Left ventricle myocardium superior (tissue), 1 donor: ENCODE measurements at regions of chr7 and their contacts with region 1.

Region 1: GRCh38 chr7:22001345-22002004 is 55.8 kb upstream of the CDCA7L start:
- DNase-seq: no peak
- ATAC-seq: peak; percentile 33

Region 2: DNA sequence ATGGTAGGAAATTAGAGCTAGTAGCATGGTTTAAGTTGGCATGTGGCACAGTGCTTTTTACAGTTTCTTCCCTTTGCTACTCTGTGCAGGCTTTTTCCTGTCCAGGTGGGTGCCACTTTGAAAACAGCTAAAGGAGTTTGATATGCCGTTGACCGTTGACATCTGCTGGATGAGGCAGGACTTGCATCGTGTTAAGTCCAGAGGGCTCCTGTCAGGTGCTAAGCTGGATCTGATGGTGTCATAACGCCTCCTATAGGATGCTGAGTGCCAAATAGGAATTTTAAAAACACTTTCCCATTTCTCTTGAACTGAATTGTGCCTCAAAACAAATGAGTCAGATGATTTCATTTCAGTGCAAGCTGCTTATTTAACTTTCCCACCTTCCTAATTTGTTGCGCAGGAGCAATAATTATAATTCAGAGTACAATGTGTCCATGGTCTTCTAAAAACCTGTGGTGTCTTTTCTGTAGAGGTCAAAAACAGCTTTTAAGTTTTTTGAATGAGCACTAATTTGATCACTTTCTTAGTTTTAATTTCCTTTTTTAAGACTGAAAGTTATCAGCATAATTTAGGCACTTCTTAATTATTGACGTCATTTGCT is 234.1 kb before region 1 on chr7:
- intact Hi-C with region 1: loop called (anchors 2 kb)
- DNase-seq: no peak
- ATAC-seq: peak; percentile 95